ENCODE measurements at regions of chrX and their contacts with region 1.

Region 1: GRCh38 chrX:103686199-103687072 is at the start of gene MORF4L2:
- DNase-seq: peak; percentile 89 to 94 (median 91)
- ATAC-seq: peak; percentile 91 to 95 (median 94)
- H3K4me3 ChIP-seq: peak within 1 kb of the TSS; percentile 30 to 96 (median 68)
- H3K27ac ChIP-seq: peak within 1 kb of the TSS; percentile 92 to 99 (median 97)
- H3K4me1 ChIP-seq: peaks cover 0 to 36% (median 3%) of the 10 kb centered on the region in 12 donors
- H3K27me3 ChIP-seq: peaks cover 0 to 6% (median 0%) of the 10 kb centered on the region in 9 donors
- CTCF ChIP-seq: no peak
- POLR2A ChIP-seq: peak; percentile 65 to 78
- total RNA-seq, gene MORF4L2: 148 to 238 (median 189) TPM

Region 2: DNA sequence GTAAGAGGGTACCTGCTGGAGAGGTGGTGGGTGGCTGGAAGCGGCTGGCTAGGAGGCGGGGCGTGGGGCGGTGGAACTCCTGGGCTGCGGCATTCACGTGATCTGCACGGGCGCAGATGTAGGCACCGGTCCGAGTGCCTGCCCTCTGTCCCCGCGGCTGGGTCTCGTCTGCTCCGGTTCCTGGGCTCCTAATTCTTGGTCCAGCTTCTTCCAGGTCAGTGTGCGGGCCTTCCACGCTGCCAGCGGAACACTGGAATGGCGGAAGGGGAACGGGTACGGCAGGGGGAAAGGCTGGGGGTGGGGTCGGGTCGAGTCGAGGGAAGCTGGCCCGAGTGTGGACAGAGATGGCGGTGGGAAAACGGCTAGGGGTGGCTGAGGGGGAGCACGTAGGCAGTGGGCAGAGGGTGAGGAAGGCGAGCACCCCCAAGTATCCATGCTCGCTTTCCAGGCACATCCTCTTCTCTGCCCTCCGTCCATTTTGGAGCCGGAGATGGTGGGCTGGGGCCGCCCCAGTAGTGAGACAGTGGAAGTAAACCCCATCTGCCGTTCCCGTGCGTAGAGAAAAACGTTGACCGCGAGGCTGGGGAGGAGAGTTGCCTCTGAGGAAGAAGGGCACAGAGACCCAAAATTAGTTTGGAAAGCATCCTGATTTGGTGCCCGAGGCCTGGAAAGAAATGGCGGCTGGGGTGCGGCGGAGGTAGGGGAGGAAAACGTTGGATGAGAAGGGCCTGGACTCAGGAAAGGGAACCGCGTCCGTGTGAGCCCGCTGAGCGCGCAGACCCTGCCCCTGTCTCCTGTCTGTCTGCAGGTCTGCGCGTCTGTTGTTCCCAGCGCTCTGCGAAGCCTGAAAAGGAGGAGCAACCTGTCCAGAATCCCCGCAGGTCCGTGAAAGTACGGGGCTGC is 100.8 kb before region 1 on chrX and contains the start of gene TCEAL4:
- intact Hi-C with region 1: loop called in 2 of 10 experiments (anchors 5 to 10 kb)
- DNase-seq: peak; percentile 54 to 69 (median 65)
- ATAC-seq: peak; percentile 82 to 95 (median 94)
- H3K4me3 ChIP-seq: peak within 1 kb of the TSS; percentile 42 to 93 (median 66)
- H3K27ac ChIP-seq: peak within 1 kb of the TSS; percentile 62 to 89 (median 84)
- H3K4me1 ChIP-seq: peaks cover 0 to 18% (median 0%) of the 10 kb centered on the region in 12 donors
- H3K27me3 ChIP-seq: peaks cover 0 to 3% (median 0%) of the 10 kb centered on the region in 9 donors
- CTCF ChIP-seq: no peak
- POLR2A ChIP-seq: peak in 1 of 2 donors; percentile 29
- total RNA-seq, gene TCEAL4: 50.9 to 75.3 (median 64.8) TPM

Region 3: DNA sequence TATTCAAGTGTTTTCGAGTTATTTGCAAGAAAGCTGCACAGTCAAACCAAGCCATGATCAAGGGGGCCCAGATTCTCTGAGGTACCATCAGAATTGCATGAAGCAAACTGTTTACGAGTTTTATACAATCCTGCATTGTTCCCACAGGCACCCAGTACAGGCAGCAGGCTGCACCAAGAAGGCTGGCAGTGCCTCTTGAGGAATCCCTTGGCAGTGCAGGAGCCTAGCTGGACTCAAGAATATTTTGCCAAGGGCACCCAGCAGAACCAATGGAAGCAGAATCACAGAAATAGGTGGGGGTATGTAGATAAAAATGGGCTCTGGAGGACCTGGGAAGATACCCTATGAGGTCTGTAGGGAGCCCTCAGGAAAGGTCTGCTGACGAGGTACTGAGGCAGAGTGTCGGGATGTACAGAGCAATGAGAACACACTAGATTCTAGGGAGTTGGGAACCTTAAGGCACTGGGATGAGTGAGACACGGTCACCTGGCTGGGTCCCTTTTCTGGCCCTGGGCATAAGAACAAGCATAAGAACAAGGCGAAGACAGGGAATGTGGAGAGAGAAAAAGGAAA is 87.7 kb after region 1 on chrX:
- intact Hi-C with region 1: loop called in 1 of 10 experiments (anchors 5 kb)
- DNase-seq: no peak
- ATAC-seq: peak; percentile 45 to 65 (median 55)
- H3K4me3 ChIP-seq: no peak overlapping the region
- H3K27ac ChIP-seq: no peak overlapping the region
- H3K4me1 ChIP-seq: peaks cover 0 to 1% (median 0%) of the 10 kb centered on the region in 12 donors
- H3K27me3 ChIP-seq: peaks cover 0 to 19% (median 0%) of the 10 kb centered on the region in 9 donors
- CTCF ChIP-seq: peak in 9 of 12 donors; percentile 16 to 49 (median 37)
- POLR2A ChIP-seq: no peak

Region 4: GRCh38 chrX:104156630-104157529 is 470.4 kb after region 1 on chrX and contains the start of gene SLC25A53:
- intact Hi-C with region 1: loop called in 3 of 10 experiments (anchors 10 kb)
- DNase-seq: peak; percentile 78 to 84 (median 82)
- ATAC-seq: peak; percentile 96 to 98 (median 97)
- H3K4me3 ChIP-seq: peak within 1 kb of the TSS; percentile 30 to 94 (median 64)
- H3K27ac ChIP-seq: peak within 1 kb of the TSS; percentile 79 to 97 (median 88)
- H3K4me1 ChIP-seq: peaks cover 0 to 15% (median 5%) of the 10 kb centered on the region in 12 donors
- H3K27me3 ChIP-seq: peaks cover 0 to 15% (median 0%) of the 10 kb centered on the region in 9 donors
- CTCF ChIP-seq: no peak
- POLR2A ChIP-seq: peak in 1 of 2 donors; percentile 23
- total RNA-seq, gene SLC25A53: 5.3 to 16.5 (median 11.3) TPM